ENCODE measurements at regions of chr2 and their contacts with region 1.

Region 1: GRCh38 chr2:204251158-204251997 is 293.9 kb upstream of the PARD3B start:
- DNase-seq: peak; percentile 44
- ATAC-seq: peak; percentile 80
- H3K4me3 Mint-ChIP-seq: no peak overlapping the region
- H3K27ac Mint-ChIP-seq: no peak overlapping the region
- H3K4me1 Mint-ChIP-seq: no peaks in the 10 kb centered on the region
- H3K27me3 Mint-ChIP-seq: peaks cover 17% of the 10 kb centered on the region

Region 2: GRCh38 chr2:204205538-204205937 is 45.8 kb before region 1 on chr2:
- CTCF ChIA-PET with region 1: no interaction called
- POLR2A ChIA-PET with region 1: no interaction called
- intact Hi-C with region 1: no loop called
- DNase-seq: no peak
- ATAC-seq: no peak
- H3K4me3 Mint-ChIP-seq: no peak overlapping the region
- H3K27ac Mint-ChIP-seq: no peak overlapping the region
- H3K4me1 Mint-ChIP-seq: peaks cover 8% of the 10 kb centered on the region
- H3K27me3 Mint-ChIP-seq: peaks cover 7% of the 10 kb centered on the region

Region 3: GRCh38 chr2:204691911-204692510 is 440.6 kb after region 1 on chr2:
- CTCF ChIA-PET with region 1: no interaction called
- POLR2A ChIA-PET with region 1: no interaction called
- intact Hi-C with region 1: loop called in 1 of 2 experiments (anchors 5 kb)
- DNase-seq: peak; percentile 24
- ATAC-seq: peak; percentile 36
- H3K4me3 Mint-ChIP-seq: no peak overlapping the region
- H3K27ac Mint-ChIP-seq: no peak overlapping the region
- H3K4me1 Mint-ChIP-seq: peaks cover 10% of the 10 kb centered on the region
- H3K27me3 Mint-ChIP-seq: no peaks in the 10 kb centered on the region

Measured in activated CD4-positive, alpha-beta T cell treated with anti-CD3 and anti-CD28 coated beads for 36 hours (primary cell).